AG04450 (cell line): ENCODE measurements at regions of chr7 and their contacts with region 1.

Region 1: DNA sequence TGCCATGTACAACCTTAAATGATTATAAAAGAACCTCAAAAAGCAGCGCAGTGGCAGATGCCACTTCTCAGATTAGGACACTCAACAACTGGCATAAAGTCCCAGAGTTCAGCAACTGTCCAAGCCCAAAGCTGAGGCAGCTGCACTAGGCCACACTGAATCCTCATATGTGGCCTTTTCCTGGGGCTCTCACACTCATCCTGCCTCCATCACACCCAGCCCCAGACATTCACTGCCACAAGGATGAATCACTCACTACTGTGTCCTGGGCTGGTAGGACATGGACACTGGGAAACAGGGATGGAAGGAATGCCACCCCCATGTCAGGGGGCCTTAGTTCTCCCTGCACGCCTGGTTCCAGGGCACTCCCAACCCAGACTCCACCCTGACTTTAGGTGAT is 547.7 kb downstream of the TNS3 start:
- DNase-seq: no peak
- H3K4me3 ChIP-seq: no peak overlapping the region
- H3K27ac ChIP-seq: no peak overlapping the region
- H3K27me3 ChIP-seq: no peaks in the 10 kb centered on the region
- CTCF ChIP-seq: no peak

Region 2: GRCh38 chr7:46916581-46916980 is 117.6 kb before region 1 on chr7:
- CTCF ChIA-PET with region 1: interaction called, 12 read pairs
- POLR2A ChIA-PET with region 1: no interaction called
- DNase-seq: no peak
- H3K4me3 ChIP-seq: no peak overlapping the region
- H3K27ac ChIP-seq: no peak overlapping the region
- H3K27me3 ChIP-seq: no peaks in the 10 kb centered on the region
- CTCF ChIP-seq: no peak

Region 3: GRCh38 chr7:46934198-46934825 is 99.9 kb before region 1 on chr7:
- CTCF ChIA-PET with region 1: no interaction called
- POLR2A ChIA-PET with region 1: no interaction called
- DNase-seq: peak; percentile 23
- H3K4me3 ChIP-seq: no peak overlapping the region
- H3K27ac ChIP-seq: no peak overlapping the region
- H3K27me3 ChIP-seq: no peaks in the 10 kb centered on the region
- CTCF ChIP-seq: no peak

Region 4: GRCh38 chr7:47000561-47000960 is 33.6 kb before region 1 on chr7:
- CTCF ChIA-PET with region 1: no interaction called
- POLR2A ChIA-PET with region 1: no interaction called
- DNase-seq: no peak
- H3K4me3 ChIP-seq: no peak overlapping the region
- H3K27ac ChIP-seq: no peak overlapping the region
- H3K27me3 ChIP-seq: no peaks in the 10 kb centered on the region
- CTCF ChIP-seq: no peak

Region 5: GRCh38 chr7:47763063-47763974 is 729.1 kb after region 1 on chr7:
- CTCF ChIA-PET with region 1: no interaction called
- POLR2A ChIA-PET with region 1: no interaction called
- DNase-seq: peak; percentile 91
- H3K4me3 ChIP-seq: no peak overlapping the region
- H3K27ac ChIP-seq: peak overlapping the region; percentile 97
- H3K27me3 ChIP-seq: no peaks in the 10 kb centered on the region
- CTCF ChIP-seq: no peak